Activated naive CD4-positive, alpha-beta T cell treated with anti-CD3 and anti-CD28 coated beads, Interleukin-2, amount 10 ng/mL, durations not matched to agents 7 days and 5 days (primary cell): ENCODE measurements at regions of chr14 and their contacts with region 1.

Region 1: GRCh38 chr14:91060351-91061055 is at the start of gene RPS6KA5:
- DNase-seq: peak; percentile 100
- H3K4me3 Mint-ChIP-seq: peak within 1 kb of the TSS; percentile 85
- H3K27ac Mint-ChIP-seq: peak within 1 kb of the TSS; percentile 81
- H3K4me1 Mint-ChIP-seq: peaks cover 63% of the 10 kb centered on the region
- H3K27me3 Mint-ChIP-seq: no peaks in the 10 kb centered on the region

Region 2: GRCh38 chr14:90940318-90940962 is 120.1 kb before region 1 on chr14:
- CTCF ChIA-PET with region 1: no interaction called
- DNase-seq: no peak
- H3K4me3 Mint-ChIP-seq: no peak overlapping the region
- H3K27ac Mint-ChIP-seq: no peak overlapping the region
- H3K4me1 Mint-ChIP-seq: no peaks in the 10 kb centered on the region
- H3K27me3 Mint-ChIP-seq: no peaks in the 10 kb centered on the region

Region 3: GRCh38 chr14:91138511-91139359 is 78.2 kb after region 1 on chr14:
- CTCF ChIA-PET with region 1: interaction called, 12 read pairs
- DNase-seq: peak; percentile 67
- H3K4me3 Mint-ChIP-seq: no peak overlapping the region
- H3K27ac Mint-ChIP-seq: peak overlapping the region; percentile 53
- H3K4me1 Mint-ChIP-seq: peaks cover 59% of the 10 kb centered on the region
- H3K27me3 Mint-ChIP-seq: no peaks in the 10 kb centered on the region